Activated CD4-positive, alpha-beta memory T cell treated with anti-CD3 and anti-CD28 coated beads for 36 hours (primary cell): ENCODE measurements at regions of chr12 and their contacts with region 1.

Region 1: GRCh38 chr12:98397316-98398105 is 117.9 kb upstream of the TMPO start:
- DNase-seq: peak; percentile 89
- H3K4me3 Mint-ChIP-seq: peak overlapping the region; percentile 71
- H3K27ac Mint-ChIP-seq: peak overlapping the region; percentile 50
- H3K4me1 Mint-ChIP-seq: peaks cover 31% of the 10 kb centered on the region
- H3K27me3 Mint-ChIP-seq: no peaks in the 10 kb centered on the region

Region 2: GRCh38 chr12:96985480-96986362 is 1411.8 kb before region 1 on chr12:
- CTCF ChIA-PET with region 1: interaction called, 9 read pairs
- POLR2A ChIA-PET with region 1: no interaction called
- intact Hi-C with region 1: loop called (anchors 1 kb)
- DNase-seq: peak; percentile 47
- H3K4me3 Mint-ChIP-seq: peak overlapping the region; percentile 52
- H3K27ac Mint-ChIP-seq: no peak overlapping the region
- H3K4me1 Mint-ChIP-seq: peaks cover 6% of the 10 kb centered on the region
- H3K27me3 Mint-ChIP-seq: peaks cover 11% of the 10 kb centered on the region

Region 3: DNA sequence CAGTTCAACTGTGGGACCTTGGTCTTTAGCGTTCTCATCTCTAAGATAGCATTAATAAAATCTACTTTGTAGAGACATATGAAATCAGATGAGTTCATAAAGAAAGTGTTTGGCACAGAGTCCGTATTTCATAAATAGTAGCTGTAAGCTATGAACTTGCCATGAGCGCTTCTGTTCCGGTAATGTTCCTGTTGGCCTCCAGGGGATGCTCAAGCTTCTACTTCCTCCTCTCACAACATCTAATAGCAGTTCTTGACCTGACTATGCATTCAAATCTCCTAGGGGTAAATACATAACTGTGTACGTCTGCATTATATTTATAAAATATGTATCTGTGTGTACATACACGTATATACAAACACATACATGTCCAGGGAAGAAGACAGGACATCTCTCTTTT is 170.3 kb before region 1 on chr12:
- CTCF ChIA-PET with region 1: interaction called, 3 read pairs
- POLR2A ChIA-PET with region 1: no interaction called
- intact Hi-C with region 1: loop called (anchors 1 kb)
- DNase-seq: no peak
- H3K4me3 Mint-ChIP-seq: no peak overlapping the region
- H3K27ac Mint-ChIP-seq: no peak overlapping the region
- H3K4me1 Mint-ChIP-seq: no peaks in the 10 kb centered on the region
- H3K27me3 Mint-ChIP-seq: peaks cover 12% of the 10 kb centered on the region

Region 4: DNA sequence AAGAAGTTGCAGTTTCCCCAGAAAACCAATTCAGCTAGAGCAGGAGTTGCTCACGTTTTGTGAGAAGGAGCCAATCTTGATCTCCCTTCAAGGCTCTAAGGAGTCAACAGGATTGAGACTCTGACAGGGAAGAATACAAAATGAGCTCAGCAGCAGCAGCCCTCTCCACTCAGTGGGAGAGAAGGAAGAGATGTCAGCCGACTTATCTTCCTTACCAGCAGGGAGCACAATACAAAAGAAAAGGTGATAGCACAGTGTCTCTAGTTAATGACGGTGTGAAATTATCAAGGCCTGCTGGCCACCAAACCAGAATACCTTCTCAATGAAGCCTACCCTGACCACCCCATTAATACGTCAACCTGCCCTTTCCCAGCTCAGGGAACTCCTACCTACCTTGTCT is 105.7 kb before region 1 on chr12:
- CTCF ChIA-PET with region 1: no interaction called
- POLR2A ChIA-PET with region 1: no interaction called
- intact Hi-C with region 1: no loop called
- DNase-seq: no peak
- H3K4me3 Mint-ChIP-seq: no peak overlapping the region
- H3K27ac Mint-ChIP-seq: no peak overlapping the region
- H3K4me1 Mint-ChIP-seq: no peaks in the 10 kb centered on the region
- H3K27me3 Mint-ChIP-seq: peaks cover 11% of the 10 kb centered on the region

Region 5: DNA sequence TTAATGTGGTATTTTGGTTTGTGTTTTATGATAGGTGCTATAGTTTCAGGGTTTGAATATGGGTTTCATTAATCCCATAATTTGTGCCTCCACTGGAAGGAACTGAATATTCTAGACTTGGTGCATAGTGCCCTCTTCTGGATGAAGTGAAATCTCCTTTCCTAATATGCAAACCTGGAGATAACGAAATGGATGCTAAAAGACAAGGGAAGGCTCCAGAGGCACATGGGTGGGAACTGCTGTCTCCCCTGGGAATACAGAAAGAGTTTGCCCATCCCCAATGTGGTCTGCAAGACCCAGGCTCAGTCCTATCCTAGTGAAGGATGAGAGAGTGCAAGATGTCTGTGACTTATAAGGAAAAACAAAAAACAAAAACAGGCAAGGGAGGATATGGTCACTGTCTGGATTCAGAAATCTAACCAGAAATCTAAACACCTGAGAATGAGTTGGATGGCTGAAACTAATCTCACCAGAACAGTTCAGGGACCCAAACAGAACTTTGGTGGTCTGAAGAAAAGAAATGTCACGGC is 24.4 kb before region 1 on chr12:
- CTCF ChIA-PET with region 1: interaction called, 8 read pairs
- POLR2A ChIA-PET with region 1: no interaction called
- intact Hi-C with region 1: loop called (anchors 1 kb)
- DNase-seq: no peak
- H3K4me3 Mint-ChIP-seq: no peak overlapping the region
- H3K27ac Mint-ChIP-seq: no peak overlapping the region
- H3K4me1 Mint-ChIP-seq: peaks cover 10% of the 10 kb centered on the region
- H3K27me3 Mint-ChIP-seq: peaks cover 11% of the 10 kb centered on the region